Spleen (tissue), 13 donors: ENCODE measurements at regions of chr3 and their contacts with region 1.

Region 1: DNA sequence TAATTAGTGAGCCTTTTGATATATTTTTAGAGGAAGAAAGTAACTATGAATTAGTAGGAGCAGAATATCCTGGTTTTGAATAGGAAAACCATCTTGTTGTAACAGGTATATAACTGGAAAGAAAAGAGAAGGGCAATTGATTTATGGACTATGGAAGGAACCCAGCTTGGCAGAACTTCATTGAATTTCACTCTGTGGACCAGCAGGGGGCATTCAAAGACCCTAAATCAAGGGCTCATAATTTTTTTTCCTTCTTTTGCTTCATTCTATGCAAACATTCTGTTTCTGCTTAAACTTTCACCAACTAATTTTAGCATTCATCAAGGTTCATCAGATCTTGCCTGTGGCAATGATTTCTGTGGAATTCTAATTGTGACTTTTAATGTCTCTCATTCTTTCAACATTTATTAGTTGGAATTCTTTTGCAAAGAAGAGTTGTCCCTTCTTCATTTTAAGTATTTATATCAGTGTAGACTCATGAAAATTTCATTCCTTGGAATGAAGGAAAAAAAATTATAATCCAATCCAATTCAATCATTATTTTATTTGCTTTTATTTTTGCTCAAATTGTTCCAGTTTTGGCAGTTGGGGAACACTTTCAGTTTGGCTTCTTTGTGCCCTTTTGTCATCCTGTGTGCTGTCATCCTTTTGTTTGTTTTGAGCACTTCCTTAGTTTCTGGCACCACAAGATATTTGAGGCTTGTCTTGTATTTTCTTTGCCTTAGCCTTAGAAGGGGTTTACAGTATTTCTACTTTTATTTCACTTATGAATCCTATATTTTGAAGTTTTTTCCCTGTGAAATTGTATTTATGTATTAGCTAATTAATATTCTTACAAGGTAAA is 30.4 kb downstream of the NXPE3 start:
- DNase-seq: no peak
- H3K4me3 ChIP-seq: no peak overlapping the region
- H3K27ac ChIP-seq: peak overlapping the region in 5 of 8 donors; percentile 7 to 45 (median 29)
- H3K4me1 ChIP-seq: peaks cover 7 to 52% (median 22%) of the 10 kb centered on the region in 6 donors
- H3K27me3 ChIP-seq: no peaks in the 10 kb centered on the region
- CTCF ChIP-seq: peak; percentile 57 to 85 (median 77)
- POLR2A ChIP-seq: no peak

Region 2: DNA sequence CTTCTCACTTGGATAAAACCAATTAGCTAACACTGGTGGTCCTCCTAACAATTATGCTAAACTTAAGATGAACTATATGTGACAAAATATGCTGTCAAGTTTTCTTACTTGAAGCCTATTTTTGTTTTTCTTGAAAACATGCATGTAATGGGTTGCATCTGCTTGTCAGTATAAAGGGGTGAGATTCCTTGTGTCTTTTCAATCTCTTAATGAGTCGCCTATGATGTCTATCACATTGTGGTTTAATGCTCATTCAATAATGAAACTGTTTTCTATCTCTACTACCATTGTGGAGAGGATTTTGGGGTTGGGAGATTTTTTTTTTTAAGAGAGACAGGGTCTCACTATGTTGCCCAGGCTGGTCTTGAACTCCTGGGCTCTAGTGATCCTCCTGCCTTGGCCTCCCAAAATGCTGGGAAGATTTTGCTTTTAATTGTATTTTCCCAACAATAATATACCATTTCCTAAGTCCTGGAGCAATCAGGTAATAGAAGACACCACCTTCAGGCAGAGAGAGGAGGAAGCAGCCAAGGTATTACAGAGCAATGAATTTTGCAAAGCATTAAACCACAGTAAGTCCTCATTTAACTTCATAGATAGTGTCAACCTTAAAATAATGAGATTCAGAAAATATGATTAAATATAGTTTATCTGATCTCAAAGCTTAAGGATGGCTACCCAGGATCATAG is 265.1 kb before region 1 on chr3:
- intact Hi-C with region 1: no loop called
- DNase-seq: no peak
- H3K4me3 ChIP-seq: no peak overlapping the region
- H3K27ac ChIP-seq: no peak overlapping the region
- H3K4me1 ChIP-seq: peaks cover 0 to 5% (median 0%) of the 10 kb centered on the region in 6 donors
- H3K27me3 ChIP-seq: no peaks in the 10 kb centered on the region
- CTCF ChIP-seq: peak in 1 of 11 experiments; percentile 20
- POLR2A ChIP-seq: no peak

Region 3: GRCh38 chr3:101732240-101732641 is 77.2 kb before region 1 on chr3:
- intact Hi-C with region 1: no loop called
- DNase-seq: no peak
- H3K4me3 ChIP-seq: no peak overlapping the region
- H3K27ac ChIP-seq: no peak overlapping the region
- H3K4me1 ChIP-seq: peaks cover 0 to 3% (median 0%) of the 10 kb centered on the region in 6 donors
- H3K27me3 ChIP-seq: no peaks in the 10 kb centered on the region
- CTCF ChIP-seq: no peak
- POLR2A ChIP-seq: no peak

Region 4: GRCh38 chr3:102536456-102536855 is 727.1 kb after region 1 on chr3:
- intact Hi-C with region 1: loop called (anchors 5 kb)
- DNase-seq: no peak
- H3K4me3 ChIP-seq: no peak overlapping the region
- H3K27ac ChIP-seq: no peak overlapping the region
- H3K4me1 ChIP-seq: peaks cover 0 to 19% (median 0%) of the 10 kb centered on the region in 6 donors
- H3K27me3 ChIP-seq: peaks cover 0 to 4% (median 0%) of the 10 kb centered on the region in 7 donors
- CTCF ChIP-seq: peak in 7 of 11 experiments; percentile 30 to 50 (median 39)
- POLR2A ChIP-seq: no peak